ENCODE measurements at regions of chr5 and their contacts with region 1.

Region 1: DNA sequence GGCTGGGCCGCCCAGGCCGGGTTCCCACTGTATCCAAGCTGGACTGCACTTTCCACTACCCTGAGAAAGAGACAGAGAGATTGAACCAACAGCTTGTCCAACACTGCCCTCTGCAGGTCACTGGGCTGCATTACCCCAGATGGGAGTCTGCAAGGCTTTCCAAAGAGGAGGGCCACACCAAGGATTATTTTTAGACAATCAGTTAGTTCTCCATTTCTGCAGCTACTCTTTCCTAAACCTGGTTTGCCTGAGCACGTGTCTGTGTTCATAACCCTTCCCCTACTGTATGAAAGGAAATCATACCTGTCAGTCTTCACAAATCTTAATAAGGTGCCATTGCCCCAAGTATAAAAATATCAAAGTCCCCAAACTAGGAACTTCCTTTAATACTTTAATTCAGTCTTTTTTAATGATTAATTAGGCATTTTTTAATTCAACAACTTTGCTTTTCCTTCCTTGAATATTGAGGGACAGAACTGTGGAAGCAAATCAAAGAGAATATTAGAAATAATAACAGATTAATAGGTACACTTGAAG is 13.4 kb upstream of the FGF1 start:
- DNase-seq: peak; percentile 90
- H3K27ac ChIP-seq: no peak overlapping the region
- CTCF ChIP-seq: peak; percentile 99

Region 2: DNA sequence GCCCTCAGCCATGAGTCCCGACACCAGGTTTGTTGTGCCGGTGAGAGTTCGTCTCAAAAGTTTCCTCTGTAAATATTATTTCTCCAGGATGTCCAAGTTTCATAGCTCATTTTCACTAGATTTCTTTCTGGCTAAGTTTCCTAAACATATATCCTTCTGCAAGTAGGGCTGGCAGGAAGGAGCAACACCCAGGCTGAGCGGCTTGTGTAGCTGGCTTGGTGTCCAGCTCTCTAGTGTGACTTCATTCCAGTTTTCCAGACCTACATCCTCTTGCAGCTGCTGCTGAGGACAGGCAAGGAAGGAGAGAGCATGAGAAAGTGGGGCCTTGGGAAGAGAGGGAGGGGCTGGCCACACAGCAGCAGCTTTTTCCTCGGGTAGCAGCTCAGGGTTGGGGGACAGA is 93.6 kb before region 1 on chr5:
- CTCF ChIA-PET with region 1: interaction called, 32 read pairs
- POLR2A ChIA-PET with region 1: no interaction called
- DNase-seq: no peak
- H3K27ac ChIP-seq: no peak overlapping the region
- CTCF ChIP-seq: no peak

Region 3: DNA sequence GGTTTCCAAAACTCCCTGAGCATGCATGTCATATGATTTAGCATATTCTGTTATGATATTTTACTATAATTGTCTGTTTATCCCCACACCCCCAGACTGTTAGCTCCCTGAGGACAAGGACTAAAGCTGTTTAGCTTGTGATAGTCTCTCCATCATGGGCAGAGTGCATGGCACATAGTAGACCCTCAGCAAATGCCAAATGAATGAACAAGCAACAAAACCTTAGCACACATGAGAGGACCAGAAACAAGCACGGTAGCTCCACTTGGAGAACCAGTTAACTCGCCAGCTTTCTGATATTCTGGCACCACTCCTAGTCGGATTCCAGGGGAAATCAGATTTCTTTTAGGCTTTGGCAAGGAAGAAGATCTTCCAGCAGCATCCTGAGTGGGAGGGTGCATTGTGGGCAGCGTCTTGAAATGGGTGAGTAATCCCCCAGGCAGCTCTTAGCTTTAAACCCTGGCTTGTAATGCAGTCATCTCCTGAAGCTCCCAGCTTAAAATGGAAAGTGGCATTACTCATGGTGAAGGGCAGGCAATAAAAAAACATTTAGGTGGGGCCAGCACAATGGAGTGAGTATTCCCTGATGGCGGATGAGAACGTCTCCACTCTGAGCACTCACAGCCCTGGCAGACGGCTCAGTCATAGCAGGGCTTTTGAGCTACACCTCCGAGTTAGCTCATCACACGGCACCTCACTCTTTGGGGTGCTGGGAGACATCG is 54.5 kb before region 1 on chr5:
- CTCF ChIA-PET with region 1: interaction called, 10 read pairs
- POLR2A ChIA-PET with region 1: no interaction called
- DNase-seq: peak; percentile 99
- H3K27ac ChIP-seq: peak overlapping the region; percentile 94
- CTCF ChIP-seq: no peak

Region 4: DNA sequence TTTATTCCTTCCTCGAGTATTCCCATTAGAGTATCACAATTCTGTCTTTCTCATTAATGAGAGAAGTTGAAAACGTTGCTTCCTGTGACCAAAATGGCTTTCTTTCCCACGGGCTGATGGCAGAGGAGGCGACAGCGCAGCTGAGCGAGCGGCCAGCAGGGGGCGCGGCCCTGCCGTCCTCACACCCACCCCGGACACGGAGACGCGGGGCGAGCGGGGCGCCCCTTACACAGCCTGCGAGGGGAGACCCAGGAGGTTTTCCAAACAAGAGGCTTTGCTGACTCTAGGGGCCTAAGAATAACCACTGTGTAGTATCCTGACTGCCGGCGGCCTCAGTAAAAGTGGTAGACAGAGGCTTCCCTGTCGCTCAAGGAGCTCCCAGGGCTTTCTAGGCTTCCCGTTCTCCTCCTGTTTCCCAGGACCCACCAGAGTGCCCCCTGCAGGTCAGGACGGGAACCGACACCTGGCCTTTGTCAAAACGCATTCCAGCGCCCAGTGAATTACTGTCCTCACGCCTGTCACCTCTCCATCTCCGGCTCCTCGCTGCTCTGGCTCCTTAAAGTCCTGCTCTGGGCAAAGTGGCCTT is 14.0 kb after region 1 on chr5:
- CTCF ChIA-PET with region 1: interaction called, 23 read pairs
- POLR2A ChIA-PET with region 1: no interaction called
- DNase-seq: peak; percentile 72
- H3K27ac ChIP-seq: peak overlapping the region; percentile 54
- CTCF ChIP-seq: peak; percentile 100

Region 5: DNA sequence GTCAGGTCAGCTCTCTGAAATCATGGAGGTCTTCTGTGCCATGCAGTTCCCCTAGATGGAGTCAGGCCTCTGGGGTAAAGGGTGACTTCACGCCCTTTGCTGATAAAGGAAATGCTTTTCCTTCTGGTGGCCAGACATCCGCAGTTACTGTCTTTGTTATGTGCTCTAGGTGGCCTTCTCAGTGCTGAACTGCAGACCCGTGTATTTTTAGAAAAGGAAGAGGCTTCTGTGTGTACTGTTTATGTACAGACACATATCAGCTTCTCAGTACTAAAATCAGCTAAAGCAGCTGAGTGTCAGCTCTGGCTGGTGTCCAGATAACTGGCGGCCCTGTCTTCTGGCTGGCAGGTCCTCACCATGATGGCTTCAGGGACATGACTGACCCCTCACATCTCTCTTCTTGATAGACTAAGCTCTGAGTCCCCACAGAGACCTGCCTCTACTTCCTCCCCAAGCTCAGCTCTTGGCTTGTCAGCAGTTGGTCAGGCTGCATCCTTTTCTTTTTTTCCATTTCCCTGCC is 146.2 kb after region 1 on chr5:
- CTCF ChIA-PET with region 1: no interaction called
- POLR2A ChIA-PET with region 1: no interaction called
- DNase-seq: no peak
- H3K27ac ChIP-seq: no peak overlapping the region
- CTCF ChIP-seq: no peak

Region 6: DNA sequence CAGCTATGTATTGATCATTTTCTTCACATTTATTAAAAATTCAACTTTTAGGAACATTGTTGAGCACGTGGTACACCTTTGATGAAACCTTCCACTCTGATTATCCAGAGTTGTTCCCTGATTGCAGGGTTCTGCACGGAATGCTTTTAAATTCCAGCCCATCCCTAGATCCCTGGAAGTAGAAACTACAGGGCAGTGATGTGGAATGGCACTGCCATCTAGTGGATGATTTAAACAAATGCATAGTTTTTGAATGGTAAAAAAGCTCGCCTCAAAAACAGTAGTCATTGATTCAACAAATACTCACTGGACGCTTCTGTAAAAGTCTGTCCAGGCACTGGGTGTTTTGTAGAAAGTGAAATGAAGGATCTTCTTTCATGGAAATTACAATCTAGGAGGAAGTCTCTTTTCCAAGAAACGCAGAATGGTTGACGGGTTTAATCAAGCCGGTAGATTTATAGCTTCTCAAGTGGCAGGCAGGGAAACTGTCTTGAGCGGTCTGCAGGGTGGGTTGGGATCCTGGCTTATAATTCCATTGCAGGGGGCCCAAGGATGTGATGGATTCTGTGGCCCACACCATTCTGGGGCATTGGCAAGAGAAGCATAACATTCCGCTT is 189.3 kb after region 1 on chr5:
- CTCF ChIA-PET with region 1: interaction called, 12 read pairs
- POLR2A ChIA-PET with region 1: no interaction called
- DNase-seq: peak; percentile 79
- H3K27ac ChIP-seq: no peak overlapping the region
- CTCF ChIP-seq: peak; percentile 90